Activated CD4-positive, alpha-beta T cell treated with anti-CD3 and anti-CD28 coated beads for 36 hours (primary cell): ENCODE measurements at regions of chr6 and their contacts with region 1.

Region 1: GRCh38 chr6:41895300-41896233 is at the start of gene USP49:
- DNase-seq: peak; percentile 96
- ATAC-seq: peak; percentile 92
- H3K4me3 Mint-ChIP-seq: no peak within 1 kb of the TSS
- H3K27ac Mint-ChIP-seq: peak within 1 kb of the TSS; percentile 95
- H3K4me1 Mint-ChIP-seq: peaks cover 13% of the 10 kb centered on the region
- H3K27me3 Mint-ChIP-seq: no peaks in the 10 kb centered on the region
- total RNA-seq, gene USP49: 5.6 to 7.3 TPM

Region 2: GRCh38 chr6:41545703-41546474 is 349.7 kb before region 1 on chr6 and contains the start of gene FOXP4:
- CTCF ChIA-PET with region 1: no interaction called
- POLR2A ChIA-PET with region 1: no interaction called
- intact Hi-C with region 1: loop called in 1 of 2 experiments (anchors 5 kb)
- DNase-seq: peak; percentile 92
- ATAC-seq: peak; percentile 84
- H3K4me3 Mint-ChIP-seq: peak within 1 kb of the TSS; percentile 84
- H3K27ac Mint-ChIP-seq: peak within 1 kb of the TSS; percentile 92
- H3K4me1 Mint-ChIP-seq: peaks cover 15% of the 10 kb centered on the region
- H3K27me3 Mint-ChIP-seq: peaks cover 6% of the 10 kb centered on the region
- total RNA-seq, gene FOXP4: 11.1 to 13.8 TPM

Region 3: GRCh38 chr6:41779793-41780545 is 115.6 kb before region 1 on chr6 and contains the start of gene FRS3:
- CTCF ChIA-PET with region 1: interaction called, 3 read pairs
- POLR2A ChIA-PET with region 1: no interaction called
- intact Hi-C with region 1: loop called in 1 of 2 experiments (anchors 1 kb)
- DNase-seq: peak; percentile 100
- ATAC-seq: peak; percentile 98
- H3K4me3 Mint-ChIP-seq: peak within 1 kb of the TSS; percentile 85
- H3K27ac Mint-ChIP-seq: peak within 1 kb of the TSS; percentile 75
- H3K4me1 Mint-ChIP-seq: peaks cover 18% of the 10 kb centered on the region
- H3K27me3 Mint-ChIP-seq: peaks cover 7% of the 10 kb centered on the region
- total RNA-seq, gene FRS3: 4.8 to 5.6 TPM

Region 4: GRCh38 chr6:41824571-41825569 is 70.7 kb before region 1 on chr6:
- CTCF ChIA-PET with region 1: no interaction called
- POLR2A ChIA-PET with region 1: interaction called, 13 read pairs
- intact Hi-C with region 1: no loop called
- DNase-seq: no peak
- ATAC-seq: no peak
- H3K4me3 Mint-ChIP-seq: no peak overlapping the region
- H3K27ac Mint-ChIP-seq: no peak overlapping the region
- H3K4me1 Mint-ChIP-seq: no peaks in the 10 kb centered on the region
- H3K27me3 Mint-ChIP-seq: no peaks in the 10 kb centered on the region

Region 5: GRCh38 chr6:41941280-41942066 is 45.9 kb after region 1 on chr6 and contains the start of gene CCND3:
- CTCF ChIA-PET with region 1: no interaction called
- POLR2A ChIA-PET with region 1: no interaction called
- intact Hi-C with region 1: loop called in 1 of 2 experiments (anchors 1 kb)
- DNase-seq: peak; percentile 96
- ATAC-seq: peak; percentile 79
- H3K4me3 Mint-ChIP-seq: peak within 1 kb of the TSS; percentile 100
- H3K27ac Mint-ChIP-seq: peak within 1 kb of the TSS; percentile 96
- H3K4me1 Mint-ChIP-seq: peaks cover 63% of the 10 kb centered on the region
- H3K27me3 Mint-ChIP-seq: no peaks in the 10 kb centered on the region
- total RNA-seq, gene CCND3: 625 to 806 TPM

Region 6: GRCh38 chr6:42104095-42104806 is 208.7 kb after region 1 on chr6:
- CTCF ChIA-PET with region 1: interaction called, 4 read pairs
- POLR2A ChIA-PET with region 1: no interaction called
- intact Hi-C with region 1: loop called in 1 of 2 experiments (anchors 5 kb)
- DNase-seq: peak; percentile 88
- ATAC-seq: peak; percentile 66
- H3K4me3 Mint-ChIP-seq: peak overlapping the region; percentile 61
- H3K27ac Mint-ChIP-seq: peak overlapping the region; percentile 64
- H3K4me1 Mint-ChIP-seq: peaks cover 27% of the 10 kb centered on the region
- H3K27me3 Mint-ChIP-seq: peaks cover 2% of the 10 kb centered on the region

Region 7: GRCh38 chr6:42766141-42766670 is 870.6 kb after region 1 on chr6:
- CTCF ChIA-PET with region 1: no interaction called
- POLR2A ChIA-PET with region 1: no interaction called
- intact Hi-C with region 1: no loop called
- DNase-seq: no peak
- ATAC-seq: no peak
- H3K4me3 Mint-ChIP-seq: no peak overlapping the region
- H3K27ac Mint-ChIP-seq: no peak overlapping the region
- H3K4me1 Mint-ChIP-seq: peaks cover 26% of the 10 kb centered on the region
- H3K27me3 Mint-ChIP-seq: no peaks in the 10 kb centered on the region